ENCODE measurements at regions of chr21 and their contacts with region 1.

Region 1: GRCh38 chr21:34915364-34915841 is 133.7 kb downstream of the RUNX1 start:
- DNase-seq: no peak
- H3K4me3 ChIP-seq: no peak overlapping the region
- H3K4me3 Mint-ChIP-seq: no peak overlapping the region
- H3K27ac ChIP-seq: no peak overlapping the region
- H3K27ac Mint-ChIP-seq: no peak overlapping the region
- H3K4me1 ChIP-seq: peaks cover 38% of the 10 kb centered on the region
- H3K4me1 Mint-ChIP-seq: peaks cover 63 to 95% (median 76%) of the 10 kb centered on the region in 4 donors
- H3K27me3 ChIP-seq: no peaks in the 10 kb centered on the region
- H3K27me3 Mint-ChIP-seq: no peaks in the 10 kb centered on the region

Region 2: DNA sequence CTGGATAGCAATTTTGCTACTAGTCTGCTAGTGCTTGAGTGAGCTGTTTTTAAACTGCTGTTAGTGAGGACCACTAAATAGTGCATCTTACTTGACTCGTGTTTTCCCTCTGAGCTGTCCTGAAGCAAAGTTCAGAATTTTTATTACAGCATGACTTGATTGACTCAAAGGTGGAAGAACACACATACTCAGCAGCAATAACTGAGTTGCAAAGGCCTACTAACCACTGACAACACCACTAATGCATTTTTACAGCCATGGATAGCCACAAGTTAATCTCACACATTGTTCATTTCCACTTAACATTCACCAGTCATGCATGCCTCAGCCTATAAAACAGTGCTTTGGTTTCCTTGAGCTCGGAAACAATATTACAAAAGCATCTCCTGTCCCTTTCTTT is 15.0 kb before region 1 on chr21:
- CTCF ChIA-PET with region 1: interaction called, 3 read pairs
- POLR2A ChIA-PET with region 1: no interaction called
- intact Hi-C with region 1: loop called (anchors 2 kb)
- DNase-seq: no peak
- H3K4me3 ChIP-seq: no peak overlapping the region
- H3K4me3 Mint-ChIP-seq: no peak overlapping the region
- H3K27ac ChIP-seq: no peak overlapping the region
- H3K27ac Mint-ChIP-seq: no peak overlapping the region
- H3K4me1 ChIP-seq: peaks cover 16% of the 10 kb centered on the region
- H3K4me1 Mint-ChIP-seq: peaks cover 31 to 45% (median 39%) of the 10 kb centered on the region in 4 donors
- H3K27me3 ChIP-seq: no peaks in the 10 kb centered on the region
- H3K27me3 Mint-ChIP-seq: no peaks in the 10 kb centered on the region